Activated T-helper 2 cell treated with anti-CD3 and anti-CD28 coated beads, Interferon-gamma antibody, Interleukin-2, Interleukin-4, amounts not matched to agents 10 μg/mL and 5 μg/mL and 100 μg/mL, durations not matched to agents 14 hours and 24 hours and 36 hours (primary cell): ENCODE measurements at regions of chr9 and their contacts with region 1.

Region 1: GRCh38 chr9:129139993-129140396 is 28.8 kb downstream of the PTPA start:
- DNase-seq: peak; percentile 77
- H3K4me3 Mint-ChIP-seq: peak overlapping the region; percentile 86
- H3K27ac Mint-ChIP-seq: peak overlapping the region; percentile 97
- H3K4me1 Mint-ChIP-seq: peaks cover 37% of the 10 kb centered on the region
- H3K27me3 Mint-ChIP-seq: no peaks in the 10 kb centered on the region

Region 2: GRCh38 chr9:128656416-128657343 is 483.3 kb before region 1 on chr9 and contains the start of gene DYNC2I2:
- intact Hi-C with region 1: no loop called
- DNase-seq: peak; percentile 94
- H3K4me3 Mint-ChIP-seq: peak within 1 kb of the TSS; percentile 95
- H3K27ac Mint-ChIP-seq: peak within 1 kb of the TSS; percentile 100
- H3K4me1 Mint-ChIP-seq: peaks cover 3% of the 10 kb centered on the region
- H3K27me3 Mint-ChIP-seq: no peaks in the 10 kb centered on the region
- total RNA-seq, gene DYNC2I2: 41.7 and 43.5 TPM in 2 replicates

Region 3: DNA sequence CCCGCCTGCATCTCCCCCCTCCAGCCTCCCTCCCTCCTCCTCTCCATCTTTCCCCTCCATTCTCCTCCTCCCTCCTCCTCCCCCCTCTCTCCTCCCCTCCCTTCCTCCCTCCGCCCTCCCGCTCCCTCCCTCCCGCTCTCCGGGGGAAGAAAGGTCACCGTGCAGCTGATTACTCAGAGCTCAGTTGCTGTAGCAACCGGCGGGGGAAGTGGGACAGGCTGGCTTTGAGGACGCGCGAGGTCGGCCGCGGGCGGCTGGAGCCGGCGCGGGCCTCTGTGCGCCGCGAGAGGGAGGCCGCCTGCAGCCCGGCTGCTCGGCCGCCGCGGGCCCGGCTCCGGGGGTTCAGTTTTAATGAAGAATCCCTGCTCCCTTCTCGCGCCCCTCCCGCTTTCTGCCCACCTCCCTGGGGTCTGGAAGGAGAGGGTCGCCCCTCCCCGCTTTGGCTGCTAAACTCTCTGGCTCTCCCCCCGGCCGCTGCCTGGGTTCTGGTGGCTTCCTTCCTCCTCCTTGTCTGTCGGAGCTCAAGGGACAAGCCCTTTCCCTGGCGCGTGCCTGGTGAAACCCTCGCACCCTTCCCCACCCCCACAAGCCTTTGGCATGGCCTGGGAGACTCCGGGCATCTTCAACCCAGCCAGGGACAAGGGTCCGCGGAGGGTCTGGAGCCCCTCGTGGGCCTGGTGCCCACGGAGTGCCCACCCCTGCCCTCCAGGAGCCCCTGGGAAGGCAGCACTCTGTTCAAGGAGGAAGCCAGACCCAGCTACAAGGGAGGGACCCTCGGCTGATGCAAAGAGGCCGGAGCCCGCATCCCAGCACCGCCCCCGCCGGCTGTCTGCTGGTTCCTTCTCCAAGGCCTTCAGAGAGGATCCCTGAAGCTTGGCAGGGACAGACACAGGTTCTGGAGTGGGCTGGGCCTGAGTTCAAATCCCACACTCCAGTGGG is 320.6 kb after region 1 on chr9:
- intact Hi-C with region 1: loop called (anchors 1 kb)
- DNase-seq: peak; percentile 81
- H3K4me3 Mint-ChIP-seq: peak overlapping the region; percentile 74
- H3K27ac Mint-ChIP-seq: peak overlapping the region; percentile 88
- H3K4me1 Mint-ChIP-seq: peaks cover 32% of the 10 kb centered on the region
- H3K27me3 Mint-ChIP-seq: peaks cover 3% of the 10 kb centered on the region

Region 4: GRCh38 chr9:129487642-129488409 is 347.8 kb after region 1 on chr9:
- intact Hi-C with region 1: loop called (anchors 2 kb)
- DNase-seq: peak; percentile 28
- H3K4me3 Mint-ChIP-seq: peak overlapping the region; percentile 91
- H3K27ac Mint-ChIP-seq: peak overlapping the region; percentile 100
- H3K4me1 Mint-ChIP-seq: peaks cover 52% of the 10 kb centered on the region
- H3K27me3 Mint-ChIP-seq: no peaks in the 10 kb centered on the region

Region 5: GRCh38 chr9:129495534-129496325 is 355.7 kb after region 1 on chr9:
- intact Hi-C with region 1: loop called (anchors 2 kb)
- DNase-seq: peak; percentile 75
- H3K4me3 Mint-ChIP-seq: peak overlapping the region; percentile 74
- H3K27ac Mint-ChIP-seq: peak overlapping the region; percentile 65
- H3K4me1 Mint-ChIP-seq: peaks cover 29% of the 10 kb centered on the region
- H3K27me3 Mint-ChIP-seq: no peaks in the 10 kb centered on the region

Region 6: GRCh38 chr9:129610473-129611301 is 470.7 kb after region 1 on chr9:
- intact Hi-C with region 1: loop called (anchors 1 kb)
- DNase-seq: peak; percentile 65
- H3K4me3 Mint-ChIP-seq: peak overlapping the region; percentile 80
- H3K27ac Mint-ChIP-seq: peak overlapping the region; percentile 70
- H3K4me1 Mint-ChIP-seq: peaks cover 25% of the 10 kb centered on the region
- H3K27me3 Mint-ChIP-seq: no peaks in the 10 kb centered on the region

Region 7: GRCh38 chr9:129783516-129784361 is 643.7 kb after region 1 on chr9:
- intact Hi-C with region 1: loop called (anchors 10 kb)
- DNase-seq: peak; percentile 63
- H3K4me3 Mint-ChIP-seq: no peak overlapping the region
- H3K27ac Mint-ChIP-seq: no peak overlapping the region
- H3K4me1 Mint-ChIP-seq: peaks cover 4% of the 10 kb centered on the region
- H3K27me3 Mint-ChIP-seq: peaks cover 14% of the 10 kb centered on the region